ENCODE measurements at regions of chr2 and their contacts with region 1.

Region 1: GRCh38 chr2:239401067-239401880 is 454 bp upstream of the HDAC4 start:
- DNase-seq: peak; percentile 99 to 100 (median 100)
- H3K4me3 ChIP-seq: peak overlapping the region; percentile 87 to 89
- H3K4me3 Mint-ChIP-seq: peak overlapping the region; percentile 83 to 96 (median 92)
- H3K27ac ChIP-seq: peak overlapping the region; percentile 100
- H3K27ac Mint-ChIP-seq: peak overlapping the region; percentile 92 to 100 (median 98)
- H3K4me1 ChIP-seq: peaks cover 30% of the 10 kb centered on the region
- H3K4me1 Mint-ChIP-seq: peaks cover 15 to 54% (median 34%) of the 10 kb centered on the region in 4 donors
- H3K27me3 ChIP-seq: no peaks in the 10 kb centered on the region
- H3K27me3 Mint-ChIP-seq: no peaks in the 10 kb centered on the region

Region 2: GRCh38 chr2:239143858-239144718 is 257.2 kb before region 1 on chr2:
- CTCF ChIA-PET with region 1: interaction called, 13 read pairs
- POLR2A ChIA-PET with region 1: interaction called, 4 read pairs
- intact Hi-C with region 1: loop called (anchors 2 kb)
- DNase-seq: peak in 4 of 5 donors; percentile 15 to 25 (median 18)
- H3K4me3 ChIP-seq: no peak overlapping the region
- H3K4me3 Mint-ChIP-seq: no peak overlapping the region
- H3K27ac ChIP-seq: no peak overlapping the region
- H3K27ac Mint-ChIP-seq: peak overlapping the region in 3 of 7 donors; percentile 22 to 65 (median 56)
- H3K4me1 ChIP-seq: no peaks in the 10 kb centered on the region
- H3K4me1 Mint-ChIP-seq: peaks cover 2 to 14% (median 6%) of the 10 kb centered on the region in 4 donors
- H3K27me3 ChIP-seq: no peaks in the 10 kb centered on the region
- H3K27me3 Mint-ChIP-seq: no peaks in the 10 kb centered on the region

Region 3: GRCh38 chr2:239288951-239289511 is 112.2 kb before region 1 on chr2:
- CTCF ChIA-PET with region 1: interaction called, 3 read pairs
- POLR2A ChIA-PET with region 1: interaction called, 13 read pairs
- intact Hi-C with region 1: loop called (anchors 10 kb)
- DNase-seq: peak; percentile 61 to 76 (median 64)
- H3K4me3 ChIP-seq: peak overlapping the region in 1 of 2 donors; percentile 29
- H3K4me3 Mint-ChIP-seq: peak overlapping the region; percentile 63 to 86 (median 81)
- H3K27ac ChIP-seq: peak overlapping the region; percentile 54
- H3K27ac Mint-ChIP-seq: peak overlapping the region; percentile 86 to 99 (median 95)
- H3K4me1 ChIP-seq: peaks cover 81% of the 10 kb centered on the region
- H3K4me1 Mint-ChIP-seq: peaks cover 53 to 84% (median 68%) of the 10 kb centered on the region in 4 donors
- H3K27me3 ChIP-seq: no peaks in the 10 kb centered on the region
- H3K27me3 Mint-ChIP-seq: no peaks in the 10 kb centered on the region

Region 4: DNA sequence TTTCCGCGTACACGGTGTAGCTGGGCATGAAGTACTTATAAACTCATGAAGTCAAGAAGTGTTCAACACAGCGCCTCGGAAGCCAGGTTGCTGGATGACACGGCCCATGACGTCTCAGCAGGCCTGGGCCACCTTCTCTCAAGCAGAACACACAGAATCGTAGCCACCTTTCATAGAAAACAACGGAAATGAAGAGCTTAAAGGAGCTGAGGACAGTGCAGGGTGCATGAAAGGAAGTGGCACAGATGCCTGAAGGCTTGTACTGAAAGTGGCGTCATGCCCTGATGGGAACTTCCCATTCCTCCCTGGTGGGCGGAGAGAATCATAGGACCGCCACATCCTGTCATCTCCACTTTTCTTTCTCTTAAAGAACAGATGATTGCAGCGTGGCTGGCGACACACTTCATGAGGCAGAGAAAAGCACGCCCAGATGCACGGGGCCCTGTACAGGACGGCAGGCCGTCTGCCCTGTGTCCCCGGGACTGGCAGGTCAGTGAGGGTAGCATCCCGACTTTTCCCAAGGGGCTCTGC is 31.6 kb before region 1 on chr2:
- CTCF ChIA-PET with region 1: no interaction called
- POLR2A ChIA-PET with region 1: interaction called, 17 read pairs
- intact Hi-C with region 1: loop called (anchors 1 kb)
- DNase-seq: peak; percentile 80 to 95 (median 90)
- H3K4me3 ChIP-seq: peak overlapping the region in 1 of 2 donors; percentile 48
- H3K4me3 Mint-ChIP-seq: peak overlapping the region; percentile 77 to 92 (median 84)
- H3K27ac ChIP-seq: peak overlapping the region; percentile 82
- H3K27ac Mint-ChIP-seq: peak overlapping the region in 1 of 7 donors; percentile 99
- H3K4me1 ChIP-seq: peaks cover 39% of the 10 kb centered on the region
- H3K4me1 Mint-ChIP-seq: peaks cover 7 to 15% (median 11%) of the 10 kb centered on the region in 4 donors
- H3K27me3 ChIP-seq: no peaks in the 10 kb centered on the region
- H3K27me3 Mint-ChIP-seq: no peaks in the 10 kb centered on the region

Region 5: GRCh38 chr2:239882331-239882732 is 481.1 kb after region 1 on chr2:
- CTCF ChIA-PET with region 1: interaction called, 3 read pairs
- POLR2A ChIA-PET with region 1: interaction called, 3 read pairs
- intact Hi-C with region 1: loop called (anchors 2 kb)
- DNase-seq: peak; percentile 50 to 67 (median 56)
- H3K4me3 ChIP-seq: no peak overlapping the region
- H3K4me3 Mint-ChIP-seq: peak overlapping the region in 1 of 8 donors; percentile 3
- H3K27ac ChIP-seq: no peak overlapping the region
- H3K27ac Mint-ChIP-seq: peak overlapping the region in 2 of 7 donors; percentile 5 to 67
- H3K4me1 ChIP-seq: peaks cover 8% of the 10 kb centered on the region
- H3K4me1 Mint-ChIP-seq: peaks cover 6 to 13% (median 8%) of the 10 kb centered on the region in 4 donors
- H3K27me3 ChIP-seq: no peaks in the 10 kb centered on the region
- H3K27me3 Mint-ChIP-seq: peaks cover 1 to 4% of the 10 kb centered on the region in 2 donors

Region 6: GRCh38 chr2:240021488-240022104 is 620.3 kb after region 1 on chr2:
- CTCF ChIA-PET with region 1: interaction called, 3 read pairs
- POLR2A ChIA-PET with region 1: interaction called, 5 read pairs
- intact Hi-C with region 1: loop called (anchors 10 kb)
- DNase-seq: peak; percentile 42 to 73 (median 51)
- H3K4me3 ChIP-seq: no peak overlapping the region
- H3K4me3 Mint-ChIP-seq: no peak overlapping the region
- H3K27ac ChIP-seq: no peak overlapping the region
- H3K27ac Mint-ChIP-seq: peak overlapping the region in 2 of 7 donors; percentile 41 to 65
- H3K4me1 ChIP-seq: peaks cover 20% of the 10 kb centered on the region
- H3K4me1 Mint-ChIP-seq: peaks cover 15 to 34% (median 20%) of the 10 kb centered on the region in 4 donors
- H3K27me3 ChIP-seq: no peaks in the 10 kb centered on the region
- H3K27me3 Mint-ChIP-seq: peaks cover 0 to 2% of the 10 kb centered on the region in 2 donors

Measured in CD4-positive, alpha-beta memory T cell (primary cell).